ENCODE measurements at regions of chr12 and their contacts with region 1.

Region 1: GRCh38 chr12:64696080-64696741 is 63.0 kb downstream of the GNS start:
- DNase-seq: peak; percentile 39
- H3K4me3 Mint-ChIP-seq: no peak overlapping the region
- H3K27ac Mint-ChIP-seq: no peak overlapping the region
- H3K4me1 Mint-ChIP-seq: no peaks in the 10 kb centered on the region
- H3K27me3 Mint-ChIP-seq: no peaks in the 10 kb centered on the region
- CTCF ChIP-seq: peak; percentile 55

Region 2: DNA sequence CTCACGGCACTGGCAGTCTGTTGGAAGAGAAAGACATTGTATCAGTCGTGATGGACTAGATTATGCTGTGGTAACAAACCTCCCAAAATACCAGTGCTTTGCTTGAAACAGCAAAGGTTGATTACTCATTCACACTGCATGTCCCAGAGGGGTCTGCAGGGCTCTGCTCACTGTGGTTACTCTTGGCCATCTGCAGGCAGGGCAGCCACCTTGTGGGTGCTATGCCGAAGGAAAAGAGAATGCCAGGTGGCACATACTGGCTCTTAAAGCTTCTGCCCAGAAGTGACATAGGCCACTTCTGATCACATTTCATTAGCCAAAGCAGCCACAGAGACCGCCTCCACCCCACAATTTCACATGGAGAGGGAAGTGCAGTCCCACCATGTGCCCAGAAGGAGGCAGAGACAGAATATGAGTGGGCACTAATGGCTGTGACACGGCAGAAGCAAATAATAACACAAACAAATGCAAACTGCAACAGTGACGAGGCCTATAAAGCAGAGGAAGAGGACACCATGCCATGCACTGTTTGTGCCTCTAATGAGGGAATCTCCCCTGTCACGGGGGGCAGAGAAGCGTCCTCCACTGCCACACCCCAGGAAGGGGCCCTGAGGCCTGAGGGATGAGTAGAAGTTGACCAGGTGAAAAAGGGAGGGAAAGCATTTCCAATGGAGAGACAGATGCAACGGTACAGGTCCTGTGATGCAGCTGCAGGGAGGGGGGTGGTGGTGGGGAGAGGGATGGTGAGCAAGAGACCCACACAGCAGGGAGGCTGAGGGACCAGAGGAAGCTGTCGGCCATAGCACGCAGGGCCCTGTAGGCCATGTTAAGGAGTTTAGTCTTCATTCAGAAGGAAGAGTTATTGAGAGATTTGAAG is 422.4 kb before region 1 on chr12:
- CTCF ChIA-PET with region 1: no interaction called
- POLR2A ChIA-PET with region 1: no interaction called
- intact Hi-C with region 1: loop called (anchors 5 kb)
- DNase-seq: peak; percentile 47
- H3K4me3 Mint-ChIP-seq: no peak overlapping the region
- H3K27ac Mint-ChIP-seq: no peak overlapping the region
- H3K4me1 Mint-ChIP-seq: no peaks in the 10 kb centered on the region
- H3K27me3 Mint-ChIP-seq: no peaks in the 10 kb centered on the region
- CTCF ChIP-seq: peak; percentile 45

Region 3: GRCh38 chr12:64544371-64545080 is 151.7 kb before region 1 on chr12:
- CTCF ChIA-PET with region 1: interaction called, 250 read pairs
- POLR2A ChIA-PET with region 1: interaction called, 16 read pairs
- intact Hi-C with region 1: loop called (anchors 1 kb)
- DNase-seq: no peak
- H3K4me3 Mint-ChIP-seq: no peak overlapping the region
- H3K27ac Mint-ChIP-seq: no peak overlapping the region
- H3K4me1 Mint-ChIP-seq: no peaks in the 10 kb centered on the region
- H3K27me3 Mint-ChIP-seq: peaks cover 9% of the 10 kb centered on the region
- CTCF ChIP-seq: no peak

Region 4: GRCh38 chr12:64610149-64610678 is 86.0 kb before region 1 on chr12 and contains the start of gene RASSF3:
- CTCF ChIA-PET with region 1: interaction called, 28 read pairs
- POLR2A ChIA-PET with region 1: interaction called, 17 read pairs
- intact Hi-C with region 1: loop called (anchors 1 kb)
- DNase-seq: peak; percentile 71
- H3K4me3 Mint-ChIP-seq: peak within 1 kb of the TSS; percentile 80
- H3K27ac Mint-ChIP-seq: peak within 1 kb of the TSS; percentile 90
- H3K4me1 Mint-ChIP-seq: peaks cover 14% of the 10 kb centered on the region
- H3K27me3 Mint-ChIP-seq: no peaks in the 10 kb centered on the region
- CTCF ChIP-seq: no peak
- total RNA-seq, gene RASSF3: 30.5 and 30.6 TPM in 2 replicates

Region 5: GRCh38 chr12:64679487-64679983 is 16.7 kb before region 1 on chr12:
- CTCF ChIA-PET with region 1: interaction called, 98 read pairs
- POLR2A ChIA-PET with region 1: interaction called, 5 read pairs
- intact Hi-C with region 1: no loop called
- DNase-seq: peak; percentile 96
- H3K4me3 Mint-ChIP-seq: peak overlapping the region; percentile 60
- H3K27ac Mint-ChIP-seq: peak overlapping the region; percentile 87
- H3K4me1 Mint-ChIP-seq: peaks cover 39% of the 10 kb centered on the region
- H3K27me3 Mint-ChIP-seq: no peaks in the 10 kb centered on the region
- CTCF ChIP-seq: no peak

Measured in MCF 10A (cell line).